ENCODE measurements at regions of chr7 and their contacts with region 1.

Region 1: DNA sequence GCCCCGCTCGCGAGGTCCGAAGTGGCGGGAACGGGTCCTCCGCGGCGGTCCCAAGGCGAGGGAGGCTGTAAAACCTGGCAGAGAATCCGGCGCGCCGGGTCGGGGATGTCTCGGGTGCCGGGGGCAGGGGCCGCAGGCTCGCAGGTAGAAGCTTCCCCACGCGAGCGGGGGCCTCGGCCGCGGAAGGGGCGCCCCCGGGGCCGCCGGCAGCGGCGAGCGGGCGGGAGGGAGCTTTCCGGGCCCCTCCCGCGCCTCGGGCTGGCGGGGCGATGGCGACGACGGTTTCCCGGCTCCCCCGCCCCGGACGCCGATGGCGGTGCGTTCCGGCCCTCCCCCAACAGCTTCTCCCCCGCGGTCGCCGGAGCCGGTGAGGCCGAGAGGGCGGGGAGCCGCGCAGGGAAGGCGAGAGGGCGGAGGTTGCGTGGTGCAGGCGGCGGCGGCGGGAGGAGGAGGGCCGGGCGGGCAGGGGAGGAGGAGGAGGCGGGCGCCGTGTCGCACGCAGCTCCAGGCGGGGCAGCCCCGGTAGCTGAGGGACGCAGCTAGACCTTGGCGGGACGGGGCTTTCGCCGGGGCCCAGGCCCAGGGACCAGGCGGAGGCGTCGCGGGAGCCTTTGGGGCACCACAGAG is at the start of gene CUL1:
- DNase-seq: peak; percentile 91
- H3K4me3 ChIP-seq: peak within 1 kb of the TSS; percentile 88
- H3K4me3 Mint-ChIP-seq: peak within 1 kb of the TSS; percentile 81
- H3K27ac Mint-ChIP-seq: peak within 1 kb of the TSS; percentile 60
- H3K4me1 ChIP-seq: peaks cover 21% of the 10 kb centered on the region
- H3K4me1 Mint-ChIP-seq: peaks cover 31% of the 10 kb centered on the region
- H3K27me3 ChIP-seq: no peaks in the 10 kb centered on the region
- H3K27me3 Mint-ChIP-seq: no peaks in the 10 kb centered on the region
- CTCF ChIP-seq: no peak
- total RNA-seq, gene CUL1: 66.6 and 71.9 TPM in 2 replicates

Region 2: DNA sequence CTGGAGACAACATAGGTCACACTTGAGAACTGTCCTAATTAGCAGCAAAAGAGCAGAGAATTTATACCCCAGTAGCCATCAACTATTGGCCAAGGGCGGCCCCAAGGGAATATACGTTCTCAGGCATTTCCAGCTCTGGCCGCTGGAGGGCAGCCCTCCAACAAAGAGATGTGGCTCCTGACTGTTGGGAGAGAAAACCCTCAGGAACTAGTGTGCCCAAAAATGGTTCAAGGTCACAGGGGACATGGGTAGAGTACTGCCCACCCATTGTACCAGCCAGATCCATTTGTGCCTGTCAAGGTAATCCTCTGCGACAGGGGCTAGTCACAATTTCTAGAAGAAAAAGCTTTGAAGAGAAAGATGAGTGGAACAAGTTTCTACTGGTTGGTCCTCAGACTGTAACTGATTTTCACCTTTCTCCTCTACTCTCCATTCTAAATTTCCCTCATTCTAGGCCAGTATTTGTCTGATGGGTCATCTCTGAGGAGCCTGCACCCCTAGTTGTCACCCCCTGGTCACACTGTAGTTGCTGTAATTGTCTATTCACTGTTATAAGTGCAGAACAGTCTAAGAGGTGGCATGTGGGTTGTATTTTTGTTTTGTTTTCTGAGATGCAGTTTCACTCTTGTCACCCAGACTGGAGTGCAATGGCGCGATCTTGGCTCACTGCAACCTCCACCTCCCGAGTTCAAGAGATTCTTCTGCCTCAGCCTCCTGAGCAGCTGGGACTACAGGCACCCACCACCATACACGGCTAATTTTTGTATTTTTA is 122.7 kb before region 1 on chr7:
- CTCF ChIA-PET with region 1: interaction called, 3 read pairs
- POLR2A ChIA-PET with region 1: no interaction called
- intact Hi-C with region 1: loop called (anchors 2 kb)
- DNase-seq: peak; percentile 61 to 76
- H3K4me3 ChIP-seq: no peak overlapping the region
- H3K4me3 Mint-ChIP-seq: no peak overlapping the region
- H3K27ac Mint-ChIP-seq: no peak overlapping the region
- H3K4me1 ChIP-seq: no peaks in the 10 kb centered on the region
- H3K4me1 Mint-ChIP-seq: no peaks in the 10 kb centered on the region
- H3K27me3 ChIP-seq: no peaks in the 10 kb centered on the region
- H3K27me3 Mint-ChIP-seq: peaks cover 3% of the 10 kb centered on the region
- CTCF ChIP-seq: peak; percentile 85 to 90

Region 3: GRCh38 chr7:148884299-148885022 is 186.0 kb after region 1 on chr7:
- CTCF ChIA-PET with region 1: no interaction called
- POLR2A ChIA-PET with region 1: no interaction called
- intact Hi-C with region 1: loop called (anchors 10 kb)
- DNase-seq: peak; percentile 91 to 96
- H3K4me3 ChIP-seq: peak overlapping the region; percentile 98
- H3K4me3 Mint-ChIP-seq: peak overlapping the region; percentile 95
- H3K27ac Mint-ChIP-seq: peak overlapping the region; percentile 93
- H3K4me1 ChIP-seq: peaks cover 6% of the 10 kb centered on the region; the same call in 1 of the 2 replicates
- H3K4me1 Mint-ChIP-seq: no peaks in the 10 kb centered on the region
- H3K27me3 ChIP-seq: no peaks in the 10 kb centered on the region
- H3K27me3 Mint-ChIP-seq: no peaks in the 10 kb centered on the region
- CTCF ChIP-seq: no peak